Esophagus muscularis mucosa (tissue), 4 donors: ENCODE measurements at regions of chr16 and their contacts with region 1.

Region 1: DNA sequence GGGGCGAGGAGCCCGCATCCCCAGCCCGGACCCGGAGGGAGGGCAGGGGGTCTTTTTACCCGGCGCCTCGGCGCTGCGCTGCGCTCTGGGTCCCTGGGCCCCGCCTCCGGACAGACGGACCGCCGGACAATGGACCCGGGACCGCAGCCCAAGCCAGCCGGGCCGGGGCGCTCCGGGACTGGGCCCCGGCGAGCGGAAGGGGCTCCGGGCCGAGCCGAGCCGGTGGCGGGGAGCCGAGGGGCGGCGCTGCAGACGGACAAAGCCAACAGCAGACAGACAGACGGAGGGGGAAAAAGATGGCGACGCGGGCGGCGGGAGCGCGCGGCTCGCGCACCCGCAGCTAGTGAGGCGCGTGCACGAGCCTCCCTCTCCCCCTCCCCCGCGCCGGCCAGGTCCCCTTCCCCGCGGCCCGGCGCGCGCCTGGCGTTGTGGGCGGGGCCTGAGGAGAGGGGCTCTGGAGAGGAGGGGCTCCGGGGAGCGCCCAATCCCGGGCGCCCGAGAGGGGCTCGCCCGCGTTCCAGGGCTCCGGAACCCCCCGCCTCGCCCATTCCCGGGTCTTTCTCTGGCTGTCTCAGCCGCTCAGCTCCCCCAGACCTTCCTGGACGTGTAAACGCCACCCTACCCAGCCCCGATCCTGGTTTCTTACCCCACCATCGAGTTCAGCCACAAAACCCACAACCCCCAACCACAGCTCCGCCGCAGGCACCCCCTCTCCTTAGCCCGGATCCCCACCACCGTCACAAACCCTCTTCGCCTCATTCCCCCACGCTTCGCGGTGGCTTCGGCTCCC is at the start of gene ZNF821:
- DNase-seq: no peak
- H3K4me3 ChIP-seq: peak within 1 kb of the TSS; percentile 79 to 97 (median 92)
- H3K27ac ChIP-seq: peak within 1 kb of the TSS; percentile 85 to 95 (median 91)
- H3K4me1 ChIP-seq: peaks cover 11 to 27% (median 25%) of the 10 kb centered on the region in 4 donors
- H3K27me3 ChIP-seq: no peaks in the 10 kb centered on the region
- CTCF ChIP-seq: peak; percentile 43 to 53 (median 51)
- EP300 ChIP-seq: no peak
- POLR2A ChIP-seq: no peak
- total RNA-seq, gene ZNF821: 2.1 to 6.5 (median 5.9) TPM

Region 2: DNA sequence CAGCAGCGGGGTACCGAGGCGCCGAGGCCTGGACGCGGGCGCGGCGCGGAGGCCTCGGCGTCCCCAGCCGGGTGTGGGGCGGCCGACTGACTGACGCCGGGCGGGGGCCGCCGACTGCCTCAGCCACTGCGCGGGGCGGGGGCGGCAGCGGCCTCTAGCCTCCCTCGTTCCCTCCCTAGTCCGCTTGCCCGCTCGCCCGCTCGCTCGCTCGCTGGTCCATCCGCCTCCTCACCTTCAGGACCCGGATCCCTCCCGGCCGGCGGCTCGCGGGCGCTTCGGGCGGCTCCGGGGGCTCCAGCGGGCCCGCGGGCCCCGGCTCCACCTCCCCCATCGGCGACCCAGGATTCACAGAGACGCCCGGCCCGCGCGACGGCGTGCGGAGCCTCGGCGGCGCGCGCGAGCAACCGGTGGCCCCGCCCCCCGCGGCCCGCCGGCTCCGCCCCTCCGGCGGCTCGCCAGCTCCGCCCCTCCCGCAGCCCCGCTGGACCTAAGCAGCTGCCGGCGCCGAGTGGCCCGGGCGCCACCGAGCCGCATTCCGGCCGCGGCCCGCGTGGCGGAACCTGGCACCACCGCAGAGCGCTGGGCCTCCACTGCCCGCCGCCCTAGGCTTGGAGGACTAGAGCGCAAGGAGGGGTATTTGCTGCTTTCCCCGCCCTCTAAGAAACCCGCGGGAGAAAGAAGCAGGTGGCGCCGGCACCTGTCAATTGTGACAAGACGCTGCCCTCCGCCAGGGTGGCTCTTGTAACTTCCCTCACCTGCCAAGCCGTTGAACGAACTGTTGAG is 160.3 kb before region 1 on chr16:
- intact Hi-C with region 1: loop called (anchors 10 kb)
- DNase-seq: no peak
- H3K4me3 ChIP-seq: peak overlapping the region; percentile 79 to 97 (median 88)
- H3K27ac ChIP-seq: peak overlapping the region; percentile 93 to 95 (median 94)
- H3K4me1 ChIP-seq: peaks cover 20 to 55% (median 50%) of the 10 kb centered on the region in 4 donors
- H3K27me3 ChIP-seq: no peaks in the 10 kb centered on the region
- CTCF ChIP-seq: no peak
- EP300 ChIP-seq: no peak
- POLR2A ChIP-seq: no peak

Region 3: DNA sequence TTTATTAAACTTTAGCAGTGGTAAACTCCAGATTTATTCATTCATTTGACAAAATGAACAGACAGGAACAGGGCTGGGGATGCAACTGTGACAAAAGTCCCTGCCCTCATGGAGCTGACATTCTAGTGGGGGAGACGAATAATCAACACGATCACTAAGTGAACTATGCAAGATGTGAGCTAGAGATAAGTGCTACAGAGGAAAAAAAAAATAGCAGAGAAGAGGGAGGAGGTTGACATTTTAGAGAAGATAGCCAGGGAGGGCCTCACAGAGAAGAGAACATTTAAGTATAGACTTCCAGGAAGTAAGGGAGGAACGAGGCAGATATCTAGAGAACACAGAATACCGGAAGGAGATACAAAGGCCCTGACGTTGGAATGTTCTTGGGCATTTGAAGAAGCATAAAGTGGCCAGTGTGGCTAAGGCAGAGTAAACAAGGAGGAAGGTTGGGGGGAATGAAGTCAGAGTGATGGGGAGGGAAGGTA is 57.5 kb before region 1 on chr16:
- intact Hi-C with region 1: no loop called
- DNase-seq: no peak
- H3K4me3 ChIP-seq: no peak overlapping the region
- H3K27ac ChIP-seq: no peak overlapping the region
- H3K4me1 ChIP-seq: no peaks in the 10 kb centered on the region
- H3K27me3 ChIP-seq: no peaks in the 10 kb centered on the region
- CTCF ChIP-seq: no peak
- EP300 ChIP-seq: no peak
- POLR2A ChIP-seq: no peak